ENCODE measurements at regions of chr13 and their contacts with region 1.

Region 1: DNA sequence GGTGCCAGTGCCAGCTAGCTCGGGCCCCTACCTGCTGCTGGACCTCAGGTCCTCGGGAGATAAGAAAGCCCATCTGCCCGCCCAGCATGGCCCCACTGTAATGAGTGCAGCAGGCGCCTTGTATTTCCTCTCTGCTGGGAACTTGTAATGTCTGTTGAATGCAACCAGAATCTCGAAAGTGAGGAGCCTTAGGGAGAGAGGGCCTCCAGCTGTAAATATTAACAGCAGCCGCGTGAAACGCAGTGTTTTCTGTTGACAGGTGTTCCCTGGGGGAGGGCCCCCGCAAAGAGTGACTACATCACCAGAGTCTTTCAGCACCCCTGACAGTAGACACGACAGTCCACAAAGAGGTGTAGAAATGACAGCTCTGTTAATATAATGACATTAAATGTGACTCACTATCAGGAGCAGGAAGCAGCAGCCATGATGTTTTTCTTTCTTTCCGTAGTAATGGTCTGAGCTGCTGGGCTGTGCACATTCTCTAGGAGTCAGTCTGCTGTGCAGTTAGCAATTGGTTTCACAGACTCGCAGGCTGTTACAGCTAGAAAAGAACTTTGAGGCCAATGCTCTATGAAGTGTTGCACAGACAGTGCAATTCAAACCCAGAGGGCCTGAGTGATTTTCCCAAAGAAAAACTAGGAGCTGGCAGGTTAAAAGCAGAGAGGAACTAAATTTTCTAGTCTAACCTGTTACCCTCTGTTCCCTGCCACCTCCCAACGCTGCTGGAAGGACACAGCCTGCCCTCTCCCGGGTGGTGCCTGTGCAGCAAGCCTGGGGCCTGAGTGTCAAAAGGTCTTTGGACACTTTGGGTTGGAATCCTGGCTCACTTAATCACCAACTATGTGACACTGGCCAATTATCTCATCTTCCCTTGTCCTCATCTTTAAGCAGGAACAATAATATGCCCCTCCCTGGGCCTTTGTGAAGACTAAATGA is 58.6 kb upstream of the WASF3 start:
- DNase-seq: peak; percentile 43
- ATAC-seq: peak; percentile 19; the same call in 1 of the 2 replicates
- H3K4me3 ChIP-seq: no peak overlapping the region
- H3K27ac ChIP-seq: peak overlapping the region; percentile 51
- H3K4me1 ChIP-seq: peaks cover 22% of the 10 kb centered on the region
- H3K27me3 ChIP-seq: no peaks in the 10 kb centered on the region; the same call in 1 of the 2 replicates
- CTCF ChIP-seq: no peak
- POLR2A ChIP-seq: no peak
- RAD21 ChIP-seq: no peak

Region 2: GRCh38 chr13:26221721-26222519 is 277.0 kb before region 1 on chr13 and contains the start of gene RNF6:
- CTCF ChIA-PET with region 1: no interaction called
- POLR2A ChIA-PET with region 1: interaction called, 6 read pairs
- dilution Hi-C with region 1: no loop called
- in situ Hi-C with region 1: no loop called
- intact Hi-C with region 1: loop called (anchors 1 kb)
- DNase-seq: peak; percentile 99
- ATAC-seq: peak; percentile 98
- H3K4me3 ChIP-seq: peak within 1 kb of the TSS; percentile 67
- H3K27ac ChIP-seq: peak within 1 kb of the TSS; percentile 96
- H3K4me1 ChIP-seq: 0 out of 2 replicates have a peak, but pooled peaks cover 2% of the 10 kb centered on the region
- H3K27me3 ChIP-seq: no peaks in the 10 kb centered on the region; the same call in 1 of the 2 replicates
- CTCF ChIP-seq: no peak
- POLR2A ChIP-seq: peak; percentile 72
- RAD21 ChIP-seq: no peak
- total RNA-seq, gene RNF6: 33.3 and 51.1 TPM in 2 replicates

Region 3: DNA sequence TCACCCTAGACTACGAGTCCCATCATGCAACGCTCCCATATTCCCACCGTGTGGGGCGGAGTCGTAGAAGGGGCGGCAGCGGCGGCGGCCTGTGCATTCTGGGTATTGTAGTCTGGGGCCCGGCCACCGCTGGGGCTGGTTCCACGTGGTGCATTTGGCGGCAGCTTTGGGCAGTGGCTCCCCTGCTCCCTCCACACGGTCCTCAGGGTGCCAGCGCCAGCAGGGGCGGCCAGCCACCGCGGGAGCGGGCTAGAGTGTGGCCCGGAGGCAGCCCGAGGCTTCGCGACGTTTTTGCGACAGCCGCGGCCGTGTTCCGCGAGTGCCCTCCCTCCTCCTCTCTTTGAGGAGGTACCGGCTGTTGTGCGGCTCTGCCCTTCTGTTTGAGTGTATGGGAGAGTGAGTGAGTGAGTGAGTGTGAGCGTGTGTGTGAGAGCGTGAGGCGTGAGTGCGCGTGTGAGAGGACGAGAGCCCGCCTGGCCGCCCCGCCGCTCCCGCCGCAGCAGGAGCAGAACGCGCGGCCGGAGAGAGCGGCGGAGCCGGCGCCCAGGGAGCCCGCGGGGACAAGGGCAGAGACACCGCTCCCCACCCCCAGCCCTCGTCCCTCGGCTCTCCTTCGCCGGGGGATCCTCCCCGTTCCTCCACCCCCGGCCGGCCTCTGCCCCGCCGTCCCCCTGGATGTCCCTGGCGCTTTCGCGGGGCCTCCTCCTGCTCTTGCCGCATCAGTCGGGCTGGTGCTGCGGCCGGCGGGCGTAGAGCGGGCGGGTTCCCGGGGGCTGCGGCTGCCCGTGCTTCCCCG is 244.9 kb before region 1 on chr13 and contains the start of gene CDK8:
- CTCF ChIA-PET with region 1: no interaction called
- POLR2A ChIA-PET with region 1: no interaction called
- dilution Hi-C with region 1: no loop called
- in situ Hi-C with region 1: no loop called
- intact Hi-C with region 1: loop called (anchors 10 kb)
- DNase-seq: peak; percentile 87
- ATAC-seq: peak; percentile 95
- H3K4me3 ChIP-seq: peak within 1 kb of the TSS; percentile 82
- H3K27ac ChIP-seq: peak within 1 kb of the TSS; percentile 98
- H3K4me1 ChIP-seq: no peaks in the 10 kb centered on the region
- H3K27me3 ChIP-seq: no peaks in the 10 kb centered on the region
- CTCF ChIP-seq: no peak
- POLR2A ChIP-seq: 0 out of 2 replicates have a peak, but pooled peaks have one; percentile 37
- RAD21 ChIP-seq: no peak
- total RNA-seq, gene CDK8: 19.0 and 21.9 TPM in 2 replicates

Region 4: DNA sequence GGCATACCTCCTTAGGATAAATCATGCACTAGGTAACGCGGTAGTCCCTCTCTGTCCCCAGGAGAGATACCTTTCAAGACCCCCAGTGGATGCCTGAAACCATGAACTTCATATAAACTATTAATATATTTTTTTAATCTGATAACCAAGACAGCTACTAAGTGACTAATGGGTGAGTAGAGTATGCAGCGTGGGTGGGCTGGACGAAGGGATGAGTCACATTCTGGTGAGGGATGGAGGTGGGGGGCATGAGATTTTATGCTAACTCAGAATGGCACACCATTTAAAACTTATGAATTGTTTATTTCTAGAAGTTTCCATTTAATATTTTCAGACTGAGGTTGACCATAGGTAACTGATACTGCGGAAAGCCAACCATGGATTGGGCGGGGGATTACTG is 198.8 kb before region 1 on chr13:
- CTCF ChIA-PET with region 1: no interaction called
- POLR2A ChIA-PET with region 1: no interaction called
- dilution Hi-C with region 1: no loop called
- in situ Hi-C with region 1: no loop called
- intact Hi-C with region 1: no loop called
- DNase-seq: peak; percentile 86
- ATAC-seq: peak; percentile 85
- H3K4me3 ChIP-seq: no peak overlapping the region
- H3K27ac ChIP-seq: no peak overlapping the region
- H3K4me1 ChIP-seq: peaks cover 5% of the 10 kb centered on the region
- H3K27me3 ChIP-seq: no peaks in the 10 kb centered on the region
- CTCF ChIP-seq: no peak
- POLR2A ChIP-seq: no peak
- RAD21 ChIP-seq: no peak

Region 5: DNA sequence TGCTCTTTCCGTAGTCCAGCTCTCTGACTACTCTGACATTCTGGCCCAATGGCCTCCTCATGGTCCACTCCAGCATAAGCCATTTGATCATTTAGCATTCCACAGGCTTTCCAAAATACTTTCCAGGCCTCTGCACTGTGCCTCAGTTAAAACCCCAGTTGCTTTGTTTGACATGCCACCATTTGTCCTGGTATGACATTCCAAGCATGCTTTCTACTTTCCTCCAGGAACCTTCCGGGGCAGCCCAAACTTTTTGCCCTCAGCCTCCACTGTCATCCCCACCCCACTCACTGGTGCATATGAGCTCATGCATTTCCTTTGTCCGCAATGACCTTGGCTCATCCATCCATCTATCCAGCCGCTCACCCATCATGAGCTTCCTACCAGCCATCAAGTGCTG is 16.8 kb after region 1 on chr13:
- CTCF ChIA-PET with region 1: no interaction called
- POLR2A ChIA-PET with region 1: no interaction called
- dilution Hi-C with region 1: no loop called
- in situ Hi-C with region 1: no loop called
- intact Hi-C with region 1: no loop called
- DNase-seq: no peak
- ATAC-seq: no peak; the same call in 1 of the 2 replicates
- H3K4me3 ChIP-seq: no peak overlapping the region
- H3K27ac ChIP-seq: no peak overlapping the region
- H3K4me1 ChIP-seq: no peaks in the 10 kb centered on the region
- H3K27me3 ChIP-seq: peaks cover 13% of the 10 kb centered on the region
- CTCF ChIP-seq: no peak
- POLR2A ChIP-seq: no peak
- RAD21 ChIP-seq: no peak

Region 6: GRCh38 chr13:26557393-26558023 is 58.6 kb after region 1 on chr13 and contains the start of gene WASF3:
- CTCF ChIA-PET with region 1: no interaction called
- POLR2A ChIA-PET with region 1: no interaction called
- dilution Hi-C with region 1: no loop called
- in situ Hi-C with region 1: no loop called
- intact Hi-C with region 1: loop called (anchors 5 kb)
- DNase-seq: peak; percentile 90
- ATAC-seq: peak; percentile 95
- H3K4me3 ChIP-seq: peak within 1 kb of the TSS; percentile 83
- H3K27ac ChIP-seq: peak within 1 kb of the TSS; percentile 72
- H3K4me1 ChIP-seq: peaks cover 16% of the 10 kb centered on the region
- H3K27me3 ChIP-seq: peaks cover 7% of the 10 kb centered on the region
- CTCF ChIP-seq: no peak
- POLR2A ChIP-seq: peak; percentile 67
- RAD21 ChIP-seq: 0 out of 2 replicates have a peak, but pooled peaks have one; percentile 4
- total RNA-seq, gene WASF3: 4.3 and 5.8 TPM in 2 replicates

Region 7: DNA sequence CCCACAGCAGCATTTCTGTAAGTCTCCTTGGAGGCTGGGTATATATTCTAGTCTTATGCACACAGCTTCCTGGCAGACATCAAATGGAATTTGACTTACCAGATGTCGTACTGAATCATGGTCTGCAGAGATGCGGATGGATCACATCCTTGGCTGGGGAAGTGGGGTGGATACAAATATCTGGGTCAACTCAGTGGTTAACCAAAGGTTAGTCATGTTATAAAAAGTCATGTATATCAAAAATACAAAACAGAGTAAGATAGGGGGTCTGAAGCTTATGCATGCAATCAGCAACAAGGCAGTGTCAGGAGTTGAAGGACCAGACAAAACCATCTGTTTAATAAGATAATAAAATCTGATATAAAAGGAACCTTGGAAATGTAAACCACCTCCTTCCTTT is 120.4 kb after region 1 on chr13:
- CTCF ChIA-PET with region 1: interaction called, 3 read pairs
- POLR2A ChIA-PET with region 1: no interaction called
- dilution Hi-C with region 1: no loop called
- in situ Hi-C with region 1: no loop called
- intact Hi-C with region 1: loop called (anchors 5 kb)
- DNase-seq: peak; percentile 91
- ATAC-seq: peak; percentile 85
- H3K4me3 ChIP-seq: no peak overlapping the region
- H3K27ac ChIP-seq: no peak overlapping the region
- H3K4me1 ChIP-seq: peaks cover 3% of the 10 kb centered on the region
- H3K27me3 ChIP-seq: no peaks in the 10 kb centered on the region
- CTCF ChIP-seq: no peak
- POLR2A ChIP-seq: no peak
- RAD21 ChIP-seq: no peak

Region 8: GRCh38 chr13:26759907-26760834 is 261.2 kb after region 1 on chr13 and contains the start of gene GPR12:
- CTCF ChIA-PET with region 1: no interaction called
- POLR2A ChIA-PET with region 1: no interaction called
- dilution Hi-C with region 1: no loop called
- in situ Hi-C with region 1: no loop called
- intact Hi-C with region 1: no loop called
- DNase-seq: no peak
- ATAC-seq: peak; percentile 51
- H3K4me3 ChIP-seq: no peak within 1 kb of the TSS
- H3K27ac ChIP-seq: no peak within 1 kb of the TSS
- H3K4me1 ChIP-seq: 0 out of 2 replicates have a peak, but pooled peaks cover 2% of the 10 kb centered on the region
- H3K27me3 ChIP-seq: peaks cover 43% of the 10 kb centered on the region
- CTCF ChIP-seq: no peak
- POLR2A ChIP-seq: no peak
- RAD21 ChIP-seq: no peak
- total RNA-seq, gene GPR12: not detected in 2 replicates

Measured in IMR-90 (cell line).